ENCODE measurements at regions of chr17 and their contacts with region 1.

Region 1: GRCh38 chr17:65100316-65101140 is 36.6 kb upstream of the RGS9 start:
- DNase-seq: peak; percentile 91
- H3K4me3 ChIP-seq: peak overlapping the region; percentile 73
- H3K27ac ChIP-seq: peak overlapping the region; percentile 81
- H3K4me1 ChIP-seq: peaks cover 41% of the 10 kb centered on the region
- CTCF ChIP-seq: peak; percentile 91

Region 2: DNA sequence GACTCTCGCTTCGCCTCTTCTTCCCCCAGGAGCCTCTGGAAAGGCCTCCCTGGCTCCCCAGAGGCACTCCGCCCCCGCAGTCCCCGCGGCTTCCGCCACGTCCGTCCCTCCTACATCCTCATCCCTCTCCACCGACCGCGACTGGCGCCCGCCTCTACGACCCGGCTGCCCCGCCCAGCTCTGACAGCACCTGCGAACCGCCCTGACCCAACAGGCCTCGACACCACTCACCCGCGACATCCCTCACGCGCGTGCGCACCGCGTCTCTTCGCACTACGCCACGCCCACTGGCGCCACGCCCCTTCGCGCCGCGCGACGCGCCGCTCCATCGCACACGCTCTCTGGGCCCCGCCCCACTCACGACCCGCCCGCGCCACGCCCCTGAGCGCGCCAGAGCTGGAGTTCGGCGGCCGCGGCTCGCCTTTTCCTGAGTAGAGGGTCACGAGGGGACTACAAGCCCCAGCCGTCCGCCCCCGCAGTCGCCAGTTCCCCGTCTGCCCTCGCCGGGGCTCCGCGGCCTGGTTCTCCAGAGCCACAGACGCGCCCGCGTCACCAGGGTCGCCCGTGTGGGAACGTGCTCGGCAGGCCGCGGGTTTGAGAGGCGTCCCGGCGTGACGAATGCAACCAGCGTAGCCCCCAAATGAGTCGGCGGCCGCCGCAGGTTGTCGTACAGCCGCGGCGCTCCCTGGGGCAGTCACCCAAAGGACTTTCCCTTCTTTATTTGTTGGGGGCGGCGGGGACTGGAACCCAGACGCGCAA is 125.0 kb before region 1 on chr17:
- CTCF ChIA-PET with region 1: interaction called, 3 read pairs
- POLR2A ChIA-PET with region 1: interaction called, 8 read pairs
- intact Hi-C with region 1: loop called (anchors 5 kb)
- DNase-seq: peak; percentile 97
- H3K4me3 ChIP-seq: peak overlapping the region; percentile 77
- H3K27ac ChIP-seq: peak overlapping the region; percentile 99
- H3K4me1 ChIP-seq: peaks cover 87% of the 10 kb centered on the region
- CTCF ChIP-seq: no peak

Region 3: GRCh38 chr17:65074778-65075250 is 25.7 kb before region 1 on chr17:
- CTCF ChIA-PET with region 1: no interaction called
- POLR2A ChIA-PET with region 1: no interaction called
- intact Hi-C with region 1: no loop called
- DNase-seq: no peak
- H3K4me3 ChIP-seq: no peak overlapping the region
- H3K27ac ChIP-seq: no peak overlapping the region
- H3K4me1 ChIP-seq: no peaks in the 10 kb centered on the region
- CTCF ChIP-seq: no peak

Region 4: GRCh38 chr17:65208717-65209116 is 108.2 kb after region 1 on chr17:
- CTCF ChIA-PET with region 1: no interaction called
- POLR2A ChIA-PET with region 1: no interaction called
- intact Hi-C with region 1: no loop called
- DNase-seq: no peak
- H3K4me3 ChIP-seq: no peak overlapping the region
- H3K27ac ChIP-seq: no peak overlapping the region
- H3K4me1 ChIP-seq: no peaks in the 10 kb centered on the region
- CTCF ChIP-seq: no peak

Region 5: GRCh38 chr17:66200685-66201092 is 1100.2 kb after region 1 on chr17:
- CTCF ChIA-PET with region 1: no interaction called
- POLR2A ChIA-PET with region 1: no interaction called
- intact Hi-C with region 1: no loop called
- DNase-seq: peak; percentile 66
- H3K4me3 ChIP-seq: no peak overlapping the region
- H3K27ac ChIP-seq: no peak overlapping the region
- H3K4me1 ChIP-seq: no peaks in the 10 kb centered on the region
- CTCF ChIP-seq: peak; percentile 82